ENCODE measurements at regions of chr2 and their contacts with region 1.

Region 1: GRCh38 chr2:43484323-43484930 is 111.4 kb downstream of the THADA start:
- DNase-seq: peak; percentile 37
- H3K4me3 ChIP-seq: no peak overlapping the region
- CTCF ChIP-seq: peak; percentile 40

Region 2: GRCh38 chr2:42944779-42945415 is 539.5 kb before region 1 on chr2:
- CTCF ChIA-PET with region 1: interaction called, 113 read pairs
- POLR2A ChIA-PET with region 1: no interaction called
- DNase-seq: no peak
- H3K4me3 ChIP-seq: no peak overlapping the region
- CTCF ChIP-seq: no peak

Region 3: GRCh38 chr2:43239981-43240761 is 244.3 kb before region 1 on chr2:
- CTCF ChIA-PET with region 1: interaction called, 19 read pairs
- POLR2A ChIA-PET with region 1: no interaction called
- DNase-seq: no peak
- H3K4me3 ChIP-seq: no peak overlapping the region
- CTCF ChIP-seq: no peak

Region 4: DNA sequence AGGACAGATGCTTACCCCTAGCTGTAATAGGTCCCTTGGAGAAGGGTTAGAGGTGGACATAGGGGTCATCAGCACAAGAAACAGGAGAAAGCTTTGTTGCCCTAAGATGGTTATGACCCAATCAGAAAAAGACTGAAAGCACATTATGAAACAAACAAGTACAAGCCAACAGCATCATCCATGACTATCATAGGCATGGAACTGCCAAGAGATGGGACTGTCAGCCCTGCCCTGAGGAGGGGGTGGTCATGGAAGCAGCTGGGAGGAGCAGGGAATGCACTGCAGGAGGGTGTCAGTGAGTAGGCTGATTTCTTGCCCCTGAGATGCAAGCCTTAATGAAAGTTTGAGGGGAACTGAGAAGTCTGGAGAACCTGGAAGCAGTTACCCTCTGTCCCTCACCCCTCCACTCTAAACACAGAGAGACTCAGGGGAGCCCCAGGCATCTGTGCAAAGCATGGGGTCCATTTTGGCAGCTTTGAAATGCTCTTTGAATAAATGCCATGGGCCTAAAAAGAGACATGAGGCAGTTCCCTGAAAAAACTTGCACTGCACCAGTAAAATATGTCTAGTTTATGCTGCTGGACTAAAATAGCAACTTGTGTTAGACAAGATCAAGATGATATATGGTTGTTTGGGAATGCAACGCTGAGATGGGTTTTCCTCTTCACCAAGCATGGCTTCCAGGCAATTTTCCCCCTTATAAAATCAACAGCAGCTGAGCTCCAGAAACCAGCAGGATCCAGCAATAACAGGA is 135.3 kb before region 1 on chr2:
- CTCF ChIA-PET with region 1: interaction called, 11 read pairs
- POLR2A ChIA-PET with region 1: no interaction called
- DNase-seq: no peak
- H3K4me3 ChIP-seq: no peak overlapping the region
- CTCF ChIP-seq: no peak

Region 5: GRCh38 chr2:43495727-43496126 is 11.3 kb after region 1 on chr2:
- CTCF ChIA-PET with region 1: interaction called, 32 read pairs
- POLR2A ChIA-PET with region 1: no interaction called
- DNase-seq: no peak
- H3K4me3 ChIP-seq: no peak overlapping the region
- CTCF ChIP-seq: no peak

Measured in AG04449 (cell line).